Activated CD8-positive, alpha-beta memory T cell treated with anti-CD3 and anti-CD28 coated beads, Interleukin-2, amount 10 ng/mL, durations not matched to agents 7 days and 5 days (primary cell): ENCODE measurements at regions of chr15 and their contacts with region 1.

Region 1: GRCh38 chr15:92808978-92809879 is 90.9 kb upstream of the CHD2 start:
- DNase-seq: peak; percentile 99
- ATAC-seq: peak; percentile 89
- H3K4me3 Mint-ChIP-seq: peak overlapping the region; percentile 80
- H3K27ac Mint-ChIP-seq: peak overlapping the region; percentile 99
- H3K4me1 Mint-ChIP-seq: peaks cover 48% of the 10 kb centered on the region
- H3K27me3 Mint-ChIP-seq: no peaks in the 10 kb centered on the region

Region 2: DNA sequence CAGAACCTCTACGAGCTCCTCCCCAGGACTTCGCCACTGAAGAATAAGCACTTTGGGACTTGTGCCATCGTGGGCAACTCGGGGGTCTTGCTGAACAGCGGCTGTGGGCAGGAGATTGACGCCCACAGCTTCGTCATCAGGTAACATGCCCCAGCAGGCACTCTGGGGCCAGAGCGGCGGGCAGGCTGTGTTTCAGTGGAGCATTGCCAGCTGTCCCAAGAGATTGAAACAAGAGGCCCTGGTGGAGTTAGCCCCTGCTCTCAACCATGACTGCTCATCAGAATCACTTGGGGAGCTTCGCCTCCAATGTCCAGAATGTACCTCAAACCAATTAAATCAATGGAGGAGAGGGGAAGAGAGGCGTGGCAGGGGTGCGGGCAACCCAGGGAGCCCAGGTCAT is 370.8 kb before region 1 on chr15:
- CTCF ChIA-PET with region 1: no interaction called
- DNase-seq: no peak
- ATAC-seq: no peak
- H3K4me3 Mint-ChIP-seq: no peak overlapping the region
- H3K27ac Mint-ChIP-seq: no peak overlapping the region
- H3K4me1 Mint-ChIP-seq: no peaks in the 10 kb centered on the region
- H3K27me3 Mint-ChIP-seq: no peaks in the 10 kb centered on the region

Region 3: GRCh38 chr15:92724144-92724543 is 85.1 kb before region 1 on chr15:
- CTCF ChIA-PET with region 1: no interaction called
- DNase-seq: no peak
- ATAC-seq: no peak
- H3K4me3 Mint-ChIP-seq: no peak overlapping the region
- H3K27ac Mint-ChIP-seq: no peak overlapping the region
- H3K4me1 Mint-ChIP-seq: peaks cover 4% of the 10 kb centered on the region
- H3K27me3 Mint-ChIP-seq: peaks cover 2% of the 10 kb centered on the region

Region 4: GRCh38 chr15:92820236-92821021 is 11.2 kb after region 1 on chr15:
- CTCF ChIA-PET with region 1: interaction called, 22 read pairs
- DNase-seq: peak; percentile 89
- ATAC-seq: peak; percentile 89
- H3K4me3 Mint-ChIP-seq: peak overlapping the region; percentile 79
- H3K27ac Mint-ChIP-seq: peak overlapping the region; percentile 85
- H3K4me1 Mint-ChIP-seq: peaks cover 52% of the 10 kb centered on the region
- H3K27me3 Mint-ChIP-seq: no peaks in the 10 kb centered on the region

Region 5: GRCh38 chr15:92881802-92882696 is 72.8 kb after region 1 on chr15:
- CTCF ChIA-PET with region 1: interaction called, 98 read pairs
- DNase-seq: peak; percentile 99
- ATAC-seq: peak; percentile 95
- H3K4me3 Mint-ChIP-seq: peak overlapping the region; percentile 82
- H3K27ac Mint-ChIP-seq: peak overlapping the region; percentile 98
- H3K4me1 Mint-ChIP-seq: peaks cover 42% of the 10 kb centered on the region
- H3K27me3 Mint-ChIP-seq: no peaks in the 10 kb centered on the region

Region 6: GRCh38 chr15:92903941-92904831 is 95.0 kb after region 1 on chr15:
- CTCF ChIA-PET with region 1: interaction called, 61 read pairs
- DNase-seq: peak; percentile 100
- ATAC-seq: peak; percentile 87
- H3K4me3 Mint-ChIP-seq: peak overlapping the region; percentile 79
- H3K27ac Mint-ChIP-seq: peak overlapping the region; percentile 99
- H3K4me1 Mint-ChIP-seq: peaks cover 51% of the 10 kb centered on the region
- H3K27me3 Mint-ChIP-seq: no peaks in the 10 kb centered on the region

Region 7: DNA sequence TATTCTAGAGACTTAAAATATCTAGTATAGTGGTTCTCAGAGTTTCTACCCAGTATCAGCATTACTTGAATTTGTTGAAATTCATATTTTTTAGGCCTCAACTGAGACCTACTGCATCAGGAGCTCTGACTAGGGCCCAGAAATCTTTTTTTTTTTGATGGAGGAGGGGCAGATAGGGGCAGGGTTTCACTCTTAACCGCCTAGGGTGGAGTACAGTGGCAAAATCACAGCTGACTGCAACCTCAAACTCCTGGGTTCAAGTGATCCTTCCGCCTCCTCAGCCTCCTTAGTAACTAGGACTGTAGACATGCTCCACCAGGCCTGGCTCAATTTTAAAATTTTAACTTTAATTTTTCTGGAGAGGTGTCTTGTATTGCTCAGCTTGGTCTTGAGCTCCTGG is 127.5 kb after region 1 on chr15:
- CTCF ChIA-PET with region 1: interaction called, 10 read pairs
- DNase-seq: no peak
- ATAC-seq: no peak
- H3K4me3 Mint-ChIP-seq: no peak overlapping the region
- H3K27ac Mint-ChIP-seq: peak overlapping the region; percentile 11
- H3K4me1 Mint-ChIP-seq: peaks cover 29% of the 10 kb centered on the region
- H3K27me3 Mint-ChIP-seq: no peaks in the 10 kb centered on the region